B cell (primary cell): ENCODE measurements at regions of chr19 and their contacts with region 1.

Region 1: DNA sequence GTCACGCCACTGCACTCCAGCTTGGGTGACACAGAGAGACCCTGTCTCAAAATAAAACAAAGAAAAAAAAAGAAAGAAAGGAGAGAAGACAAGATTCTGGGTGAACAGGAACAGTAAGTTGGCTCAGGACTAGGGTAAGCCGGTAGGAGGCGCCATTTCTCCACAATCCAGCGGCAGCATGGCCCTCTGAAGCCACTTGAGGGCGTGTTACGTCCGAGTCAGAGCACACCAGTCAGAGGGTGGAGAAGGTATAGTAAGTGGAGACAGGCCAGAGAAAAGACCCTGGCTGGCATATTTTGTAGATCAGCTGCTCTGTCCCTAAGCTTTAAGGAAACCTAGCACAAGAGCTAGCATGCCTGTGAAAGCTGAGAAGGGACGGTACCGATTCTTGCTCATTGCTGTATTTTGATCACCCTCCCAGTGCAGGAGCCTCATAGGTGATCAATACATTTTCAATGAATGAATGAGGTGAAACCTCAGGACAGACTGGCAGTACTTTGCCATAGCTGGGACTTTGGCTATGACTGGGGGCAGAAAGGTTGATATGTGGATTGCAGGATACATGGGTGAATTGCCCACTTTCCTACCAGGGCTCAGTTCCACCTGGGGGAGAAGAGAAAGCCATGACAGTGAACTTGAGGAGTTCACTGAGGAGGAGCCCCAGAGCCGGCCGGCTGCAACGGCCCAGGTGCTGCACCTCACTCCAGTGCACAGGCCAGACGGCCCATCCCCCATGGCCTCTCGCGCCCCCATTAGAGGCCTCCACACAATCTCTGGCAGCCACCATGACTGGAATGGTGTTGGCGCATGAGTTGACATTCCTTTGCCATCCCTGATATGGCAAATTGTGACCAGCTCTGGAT is 23.5 kb downstream of the POU2F2 start:
- DNase-seq: peak; percentile 92
- ATAC-seq: peak; percentile 98
- H3K4me3 ChIP-seq: no peak overlapping the region
- H3K4me3 Mint-ChIP-seq: peak overlapping the region; percentile 24
- H3K27ac ChIP-seq: peak overlapping the region in 1 of 2 donors; percentile 58
- H3K27ac Mint-ChIP-seq: peak overlapping the region; percentile 71
- H3K4me1 ChIP-seq: peaks cover 33 to 53% of the 10 kb centered on the region in 2 donors
- H3K4me1 Mint-ChIP-seq: peaks cover 57% of the 10 kb centered on the region
- H3K27me3 ChIP-seq: no peaks in the 10 kb centered on the region
- H3K27me3 Mint-ChIP-seq: no peaks in the 10 kb centered on the region
- CTCF ChIP-seq: peak; percentile 100

Region 2: GRCh38 chr19:42023121-42023942 is 85.4 kb before region 1 on chr19:
- CTCF ChIA-PET with region 1: no interaction called
- POLR2A ChIA-PET with region 1: no interaction called
- intact Hi-C with region 1: no loop called
- DNase-seq: no peak
- ATAC-seq: no peak
- H3K4me3 ChIP-seq: no peak overlapping the region
- H3K4me3 Mint-ChIP-seq: no peak overlapping the region
- H3K27ac ChIP-seq: no peak overlapping the region
- H3K27ac Mint-ChIP-seq: no peak overlapping the region
- H3K4me1 ChIP-seq: no peaks in the 10 kb centered on the region
- H3K4me1 Mint-ChIP-seq: no peaks in the 10 kb centered on the region
- H3K27me3 ChIP-seq: peaks cover 0 to 4% (median 0%) of the 10 kb centered on the region in 4 experiments
- H3K27me3 Mint-ChIP-seq: peaks cover 19% of the 10 kb centered on the region
- CTCF ChIP-seq: peak; percentile 8

Region 3: GRCh38 chr19:42121656-42122069 is 12.9 kb after region 1 on chr19:
- CTCF ChIA-PET with region 1: interaction called, 172 read pairs
- POLR2A ChIA-PET with region 1: interaction called, 77 read pairs
- intact Hi-C with region 1: no loop called
- DNase-seq: peak; percentile 81
- ATAC-seq: peak; percentile 82
- H3K4me3 ChIP-seq: peak overlapping the region in 4 of 5 experiments; percentile 30 to 62 (median 45)
- H3K4me3 Mint-ChIP-seq: peak overlapping the region; percentile 87
- H3K27ac ChIP-seq: peak overlapping the region; percentile 93 to 96
- H3K27ac Mint-ChIP-seq: peak overlapping the region; percentile 96
- H3K4me1 ChIP-seq: peaks cover 87 to 100% of the 10 kb centered on the region in 2 donors
- H3K4me1 Mint-ChIP-seq: peaks cover 90% of the 10 kb centered on the region
- H3K27me3 ChIP-seq: no peaks in the 10 kb centered on the region
- H3K27me3 Mint-ChIP-seq: no peaks in the 10 kb centered on the region
- CTCF ChIP-seq: no peak

Region 4: GRCh38 chr19:42176990-42177685 is 68.4 kb after region 1 on chr19:
- CTCF ChIA-PET with region 1: interaction called, 150 read pairs
- POLR2A ChIA-PET with region 1: interaction called, 4 read pairs
- intact Hi-C with region 1: no loop called
- DNase-seq: peak; percentile 85
- ATAC-seq: peak; percentile 93
- H3K4me3 ChIP-seq: peak overlapping the region; percentile 3 to 83 (median 48)
- H3K4me3 Mint-ChIP-seq: no peak overlapping the region
- H3K27ac ChIP-seq: no peak overlapping the region
- H3K27ac Mint-ChIP-seq: no peak overlapping the region
- H3K4me1 ChIP-seq: peaks cover 26 to 49% of the 10 kb centered on the region in 2 donors
- H3K4me1 Mint-ChIP-seq: peaks cover 15% of the 10 kb centered on the region
- H3K27me3 ChIP-seq: peaks cover 0 to 49% (median 39%) of the 10 kb centered on the region in 4 experiments
- H3K27me3 Mint-ChIP-seq: peaks cover 20% of the 10 kb centered on the region
- CTCF ChIP-seq: peak; percentile 48

Region 5: DNA sequence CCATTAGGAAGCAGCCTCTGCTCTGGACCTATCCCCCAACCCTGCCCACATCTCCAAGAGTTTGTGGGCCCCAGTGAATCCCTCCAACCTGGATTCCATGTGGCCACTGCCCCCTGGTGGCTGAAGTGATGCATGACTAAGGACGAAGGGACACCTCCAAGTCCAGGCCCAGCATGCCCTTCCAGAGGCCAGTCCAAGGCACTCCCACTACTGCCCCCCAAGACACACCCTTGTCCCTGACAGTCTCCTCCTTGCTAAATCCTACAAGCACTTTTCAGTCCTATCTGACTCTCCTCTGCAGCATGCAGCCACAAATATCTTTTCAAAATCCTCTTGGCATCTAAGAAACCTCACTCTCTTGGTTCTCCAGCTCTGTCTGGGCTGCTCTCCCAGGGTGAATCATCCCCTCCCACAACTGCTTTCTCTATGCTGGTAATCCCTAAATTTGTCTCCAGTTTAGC is 75.7 kb after region 1 on chr19:
- CTCF ChIA-PET with region 1: interaction called, 150 read pairs
- POLR2A ChIA-PET with region 1: no interaction called
- intact Hi-C with region 1: loop called (anchors 1 kb)
- DNase-seq: peak; percentile 78
- ATAC-seq: peak; percentile 64
- H3K4me3 ChIP-seq: no peak overlapping the region
- H3K4me3 Mint-ChIP-seq: no peak overlapping the region
- H3K27ac ChIP-seq: no peak overlapping the region
- H3K27ac Mint-ChIP-seq: peak overlapping the region; percentile 27
- H3K4me1 ChIP-seq: peaks cover 33 to 41% of the 10 kb centered on the region in 2 donors
- H3K4me1 Mint-ChIP-seq: peaks cover 41% of the 10 kb centered on the region
- H3K27me3 ChIP-seq: peaks cover 0 to 13% (median 12%) of the 10 kb centered on the region in 4 experiments
- H3K27me3 Mint-ChIP-seq: peaks cover 8% of the 10 kb centered on the region
- CTCF ChIP-seq: peak; percentile 91

Region 6: DNA sequence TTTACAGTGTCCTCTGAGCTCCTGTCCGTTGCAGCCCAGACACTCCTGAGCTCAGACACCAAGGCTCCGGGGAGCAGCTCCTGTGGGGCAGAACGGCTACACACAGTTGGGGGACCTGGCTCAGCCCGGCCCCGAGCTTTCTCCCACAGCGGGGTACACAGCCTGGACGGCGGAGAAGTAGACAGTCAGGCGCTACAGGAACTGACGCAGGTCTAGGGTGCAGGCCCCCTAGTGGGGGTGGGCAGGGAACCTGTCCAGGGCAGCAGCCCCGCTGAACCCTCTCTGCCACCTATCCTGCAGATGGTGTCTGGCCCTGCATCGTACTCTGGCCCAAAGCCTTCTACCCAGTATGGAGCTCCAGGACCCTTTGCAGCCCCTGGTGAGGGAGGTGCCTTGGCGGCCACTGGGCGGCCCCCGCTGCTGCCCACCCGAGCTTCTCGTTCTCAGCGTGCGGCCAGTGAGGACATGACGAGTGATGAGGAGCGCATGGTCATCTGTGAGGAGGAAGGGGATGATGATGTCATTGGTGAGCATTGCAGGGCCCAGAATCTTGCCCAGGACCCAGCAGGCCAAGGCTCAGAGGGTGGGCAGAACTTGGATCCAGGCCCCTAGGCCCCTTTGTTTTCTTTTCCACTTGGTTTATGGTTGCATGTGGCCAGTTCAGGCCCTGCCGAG is 180.3 kb after region 1 on chr19:
- CTCF ChIA-PET with region 1: interaction called, 10 read pairs
- POLR2A ChIA-PET with region 1: interaction called, 12 read pairs
- intact Hi-C with region 1: no loop called
- DNase-seq: no peak
- ATAC-seq: no peak
- H3K4me3 ChIP-seq: no peak overlapping the region
- H3K4me3 Mint-ChIP-seq: no peak overlapping the region
- H3K27ac ChIP-seq: no peak overlapping the region
- H3K27ac Mint-ChIP-seq: peak overlapping the region; percentile 26
- H3K4me1 ChIP-seq: peaks cover 18 to 24% of the 10 kb centered on the region in 2 donors
- H3K4me1 Mint-ChIP-seq: peaks cover 26% of the 10 kb centered on the region
- H3K27me3 ChIP-seq: no peaks in the 10 kb centered on the region
- H3K27me3 Mint-ChIP-seq: no peaks in the 10 kb centered on the region
- CTCF ChIP-seq: no peak

Region 7: DNA sequence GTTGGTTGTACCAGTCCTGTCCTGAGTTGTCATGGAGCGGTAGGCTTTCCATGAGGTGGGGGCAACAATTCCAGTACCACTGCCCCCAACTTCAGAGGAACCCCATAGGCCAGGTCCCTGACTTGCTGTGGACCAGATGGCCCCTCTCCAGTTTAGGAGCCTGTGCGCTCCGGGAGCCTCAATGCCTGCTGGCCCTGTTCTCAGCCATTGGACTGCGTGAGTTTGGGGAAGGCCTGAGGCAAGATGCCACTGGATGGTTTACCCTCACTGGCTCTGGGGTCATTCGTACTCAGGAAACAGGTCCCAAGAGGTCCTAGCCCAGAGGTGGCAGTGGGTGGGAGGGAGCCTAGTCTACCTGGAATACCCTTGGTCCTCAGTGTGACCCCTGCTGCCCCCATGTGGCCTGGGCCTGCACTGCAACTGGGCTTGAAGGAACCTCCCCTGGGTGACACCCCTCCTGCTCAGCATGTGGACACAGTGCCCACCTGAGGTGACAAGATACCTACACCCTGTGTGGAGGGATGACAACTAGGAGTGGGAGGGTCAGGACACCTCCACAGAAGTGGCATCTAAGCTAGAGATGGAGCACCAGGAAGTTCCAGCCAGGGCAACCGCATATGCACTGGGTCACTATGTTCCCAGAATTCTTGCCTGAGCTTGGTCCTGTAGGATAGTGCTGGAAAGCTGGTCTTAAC is 187.2 kb after region 1 on chr19:
- CTCF ChIA-PET with region 1: interaction called, 6 read pairs
- POLR2A ChIA-PET with region 1: no interaction called
- intact Hi-C with region 1: loop called (anchors 1 kb)
- DNase-seq: peak; percentile 89
- ATAC-seq: peak; percentile 98
- H3K4me3 ChIP-seq: no peak overlapping the region
- H3K4me3 Mint-ChIP-seq: no peak overlapping the region
- H3K27ac ChIP-seq: no peak overlapping the region
- H3K27ac Mint-ChIP-seq: peak overlapping the region; percentile 71
- H3K4me1 ChIP-seq: peaks cover 3 to 10% of the 10 kb centered on the region in 2 donors
- H3K4me1 Mint-ChIP-seq: peaks cover 11% of the 10 kb centered on the region
- H3K27me3 ChIP-seq: no peaks in the 10 kb centered on the region
- H3K27me3 Mint-ChIP-seq: no peaks in the 10 kb centered on the region
- CTCF ChIP-seq: peak; percentile 91

Region 8: DNA sequence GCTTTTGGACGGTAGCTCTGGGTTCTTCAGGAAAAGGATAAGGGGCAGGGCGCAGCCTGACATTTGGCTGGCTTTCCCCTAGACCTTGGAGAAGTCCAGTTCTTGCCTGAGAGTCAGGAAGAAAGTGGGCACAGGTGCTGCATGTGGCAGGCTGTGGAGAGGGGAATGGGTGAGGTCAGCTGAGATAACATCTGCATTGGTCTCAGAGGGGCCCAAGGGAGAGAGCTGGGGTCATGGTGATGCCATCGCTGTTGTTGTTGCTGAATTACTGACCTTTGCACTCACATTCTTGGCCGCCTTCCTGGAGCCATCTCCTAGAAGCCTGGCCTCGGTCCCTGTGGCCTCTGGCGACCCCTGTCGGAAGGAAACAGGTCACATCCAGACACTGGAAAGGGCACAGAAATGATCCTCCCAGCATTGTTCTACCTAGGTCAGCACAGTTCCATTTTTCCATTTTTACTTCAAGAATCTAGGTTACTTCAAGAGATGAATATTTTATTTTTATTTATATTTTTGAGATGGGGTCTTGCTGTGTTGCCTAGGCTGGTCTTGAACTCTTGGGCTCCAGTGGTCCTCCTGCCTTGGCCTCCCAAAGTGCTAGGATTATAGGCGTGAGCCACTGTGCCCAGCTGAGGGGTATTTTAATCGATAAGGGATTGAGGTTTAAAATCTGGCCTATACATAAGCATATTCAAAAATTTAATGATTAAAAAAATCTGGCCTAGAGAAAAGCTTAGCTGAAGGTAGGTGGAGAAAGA is 324.9 kb after region 1 on chr19:
- CTCF ChIA-PET with region 1: interaction called, 5 read pairs
- POLR2A ChIA-PET with region 1: no interaction called
- intact Hi-C with region 1: loop called (anchors 1 kb)
- DNase-seq: peak; percentile 65
- ATAC-seq: peak; percentile 75
- H3K4me3 ChIP-seq: no peak overlapping the region
- H3K4me3 Mint-ChIP-seq: no peak overlapping the region
- H3K27ac ChIP-seq: no peak overlapping the region
- H3K27ac Mint-ChIP-seq: no peak overlapping the region
- H3K4me1 ChIP-seq: peaks cover 0 to 4% of the 10 kb centered on the region in 2 donors
- H3K4me1 Mint-ChIP-seq: peaks cover 6% of the 10 kb centered on the region
- H3K27me3 ChIP-seq: peaks cover 0 to under 1% (median 0%) of the 10 kb centered on the region in 4 experiments
- H3K27me3 Mint-ChIP-seq: no peaks in the 10 kb centered on the region
- CTCF ChIP-seq: peak; percentile 81